SK-N-SH (cell line): ENCODE measurements at regions of chr12 and their contacts with region 1.

Region 1: DNA sequence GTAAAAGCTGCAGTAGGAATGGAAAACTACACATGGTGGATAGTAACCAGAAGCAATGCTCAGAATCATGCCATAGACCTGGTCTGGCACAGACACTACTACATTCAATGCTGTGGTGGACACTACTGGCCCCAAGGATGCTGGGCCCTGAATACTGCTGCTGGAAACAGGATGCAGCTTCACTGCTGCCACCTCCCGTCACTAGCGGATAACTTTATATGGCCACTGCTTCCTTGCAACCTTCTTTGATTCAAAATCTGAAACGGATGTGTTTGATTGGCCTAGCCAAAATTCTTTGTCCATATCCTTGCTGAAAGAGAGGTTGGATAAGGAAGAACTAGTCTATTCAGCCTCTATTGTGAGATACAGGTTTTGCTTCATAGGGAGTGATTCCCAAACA is 30.7 kb downstream of the ADCY6 start:
- DNase-seq: no peak
- H3K4me3 ChIP-seq: no peak overlapping the region
- H3K27ac ChIP-seq: no peak overlapping the region
- H3K4me1 ChIP-seq: no peaks in the 10 kb centered on the region
- H3K27me3 ChIP-seq: no peaks in the 10 kb centered on the region
- CTCF ChIP-seq: no peak
- EP300 ChIP-seq: no peak
- RAD21 ChIP-seq: no peak

Region 2: DNA sequence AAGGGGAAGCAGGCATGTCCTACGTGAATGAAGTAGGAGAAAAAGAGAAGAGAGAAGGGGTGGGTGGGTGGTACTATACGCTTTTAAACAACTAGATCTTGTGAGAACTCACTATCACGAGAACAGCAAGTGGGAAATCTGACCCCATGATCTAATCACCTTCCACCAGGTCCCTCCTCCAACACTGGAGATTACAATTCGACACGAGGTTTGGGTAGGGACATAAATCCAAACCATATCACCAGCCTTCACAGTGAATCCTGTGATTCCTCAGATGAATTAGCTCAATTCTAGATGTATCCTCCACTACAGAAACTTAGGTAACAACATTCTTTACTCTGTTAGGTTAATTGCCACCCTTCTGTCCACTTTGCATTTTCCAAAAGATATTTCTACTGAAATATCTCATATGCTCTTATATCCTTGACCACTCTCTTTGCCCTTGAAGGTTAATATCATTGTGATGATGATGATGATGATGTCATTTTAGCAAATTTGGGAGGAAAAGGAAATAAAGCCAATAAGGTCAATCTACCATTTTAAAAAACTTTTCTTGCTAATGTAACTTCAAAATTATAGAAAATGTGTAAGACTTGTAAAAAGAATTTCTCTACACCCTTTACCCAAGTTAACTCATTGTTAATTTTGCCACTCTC is 18.5 kb before region 1 on chr12:
- CTCF ChIA-PET with region 1: interaction called, 18 read pairs
- POLR2A ChIA-PET with region 1: interaction called, 4 read pairs
- DNase-seq: no peak
- H3K4me3 ChIP-seq: no peak overlapping the region
- H3K27ac ChIP-seq: no peak overlapping the region
- H3K4me1 ChIP-seq: no peaks in the 10 kb centered on the region
- H3K27me3 ChIP-seq: peaks cover 16% of the 10 kb centered on the region
- CTCF ChIP-seq: no peak
- EP300 ChIP-seq: no peak
- RAD21 ChIP-seq: no peak

Region 3: DNA sequence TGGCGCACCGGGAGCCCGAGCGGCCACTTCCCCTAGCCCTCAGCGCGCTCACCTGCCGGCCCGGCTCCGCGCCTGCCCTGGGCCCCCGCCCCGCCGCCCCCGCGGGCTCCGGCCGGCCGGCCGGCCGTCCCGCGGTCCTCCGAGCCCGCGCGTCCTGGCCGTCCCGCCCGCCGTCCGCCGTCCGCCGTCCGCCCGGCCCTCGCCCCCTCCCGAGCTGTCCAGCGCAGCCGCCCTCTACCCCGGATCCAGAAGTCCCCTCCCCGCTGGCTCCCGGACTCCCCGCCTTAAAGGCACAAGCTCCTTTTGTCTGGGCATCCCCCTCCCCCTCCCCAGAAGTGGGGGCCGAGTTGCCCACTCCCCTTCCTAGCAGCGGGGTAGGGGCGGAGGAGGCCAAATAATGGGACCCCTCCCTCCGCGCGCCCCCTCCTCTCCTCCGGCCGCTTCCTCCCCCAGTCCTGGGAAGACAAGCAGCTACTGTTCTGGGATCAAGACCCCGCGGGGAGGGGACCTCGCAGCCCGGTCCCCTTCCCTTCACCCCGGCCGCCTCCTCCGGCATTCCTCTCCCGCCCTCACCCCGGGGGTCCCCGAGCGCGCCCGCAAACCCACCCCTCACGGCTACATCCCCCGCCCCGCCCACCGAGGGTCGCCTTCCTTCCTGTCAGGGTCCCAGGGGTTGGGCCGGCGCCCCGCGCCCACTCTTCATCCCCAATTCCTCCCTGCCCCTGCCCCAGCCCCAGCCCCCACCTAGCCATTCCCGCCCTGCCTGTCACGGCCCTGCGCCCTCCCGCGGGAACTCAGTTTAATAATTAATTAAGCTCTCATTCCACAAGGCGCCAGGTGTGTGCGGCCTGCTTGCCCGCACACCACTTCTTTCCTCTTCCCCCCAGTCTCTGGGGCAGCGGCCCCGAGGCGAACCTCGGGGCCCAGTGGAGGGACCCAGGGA is 30.9 kb after region 1 on chr12 and contains the start of gene ADCY6:
- CTCF ChIA-PET with region 1: interaction called, 234 read pairs
- POLR2A ChIA-PET with region 1: no interaction called
- DNase-seq: peak; percentile 96
- H3K4me3 ChIP-seq: peak within 1 kb of the TSS; percentile 69 to 82
- H3K27ac ChIP-seq: peak within 1 kb of the TSS; percentile 33 to 72; a peak in 3 of 4 replicates
- H3K4me1 ChIP-seq: peaks cover 0 to 19% of the 10 kb centered on the region in 2 experiments; a peak in 1 of 4 replicates
- H3K27me3 ChIP-seq: no peaks in the 10 kb centered on the region
- CTCF ChIP-seq: no peak
- EP300 ChIP-seq: no peak
- RAD21 ChIP-seq: no peak
- polyA plus RNA-seq, gene ADCY6: 36.0 and 46.4 TPM in 2 replicates

Region 4: GRCh38 chr12:48946205-48946604 is 188.0 kb after region 1 on chr12:
- CTCF ChIA-PET with region 1: no interaction called
- POLR2A ChIA-PET with region 1: no interaction called
- DNase-seq: no peak
- H3K4me3 ChIP-seq: no peak overlapping the region
- H3K27ac ChIP-seq: no peak overlapping the region
- H3K4me1 ChIP-seq: no peaks in the 10 kb centered on the region
- H3K27me3 ChIP-seq: no peaks in the 10 kb centered on the region
- CTCF ChIP-seq: no peak
- EP300 ChIP-seq: no peak
- RAD21 ChIP-seq: no peak

Region 5: GRCh38 chr12:49049566-49050413 is 291.6 kb after region 1 on chr12:
- CTCF ChIA-PET with region 1: no interaction called
- POLR2A ChIA-PET with region 1: no interaction called
- DNase-seq: no peak
- H3K4me3 ChIP-seq: no peak overlapping the region
- H3K27ac ChIP-seq: peak overlapping the region in 1 of 2 experiments; percentile 59; a peak in 2 of 4 replicates
- H3K4me1 ChIP-seq: peaks cover 0 to 7% of the 10 kb centered on the region in 2 experiments; a peak in 2 of 4 replicates
- H3K27me3 ChIP-seq: no peaks in the 10 kb centered on the region
- CTCF ChIP-seq: no peak
- EP300 ChIP-seq: no peak
- RAD21 ChIP-seq: no peak